ENCODE measurements at regions of chr2 and their contacts with region 1.

Region 1: GRCh38 chr2:235045336-235045972 is 93.6 kb downstream of the SH3BP4 start:
- DNase-seq: peak in 2 of 6 donors; percentile 49 to 55
- ATAC-seq: peak in 2 of 4 donors; percentile 7 to 8
- H3K4me3 ChIP-seq: peak overlapping the region in 1 of 4 donors; percentile 6
- H3K27ac ChIP-seq: peak overlapping the region; percentile 35 to 87 (median 66)
- H3K4me1 ChIP-seq: peaks cover 52 to 66% (median 54%) of the 10 kb centered on the region in 3 donors
- H3K27me3 ChIP-seq: no peaks in the 10 kb centered on the region
- CTCF ChIP-seq: no peak

Region 2: GRCh38 chr2:234792621-234793022 is 252.8 kb before region 1 on chr2:
- intact Hi-C with region 1: no loop called
- DNase-seq: no peak
- ATAC-seq: no peak
- H3K4me3 ChIP-seq: no peak overlapping the region
- H3K27ac ChIP-seq: no peak overlapping the region
- H3K4me1 ChIP-seq: no peaks in the 10 kb centered on the region
- H3K27me3 ChIP-seq: no peaks in the 10 kb centered on the region
- CTCF ChIP-seq: no peak

Region 3: DNA sequence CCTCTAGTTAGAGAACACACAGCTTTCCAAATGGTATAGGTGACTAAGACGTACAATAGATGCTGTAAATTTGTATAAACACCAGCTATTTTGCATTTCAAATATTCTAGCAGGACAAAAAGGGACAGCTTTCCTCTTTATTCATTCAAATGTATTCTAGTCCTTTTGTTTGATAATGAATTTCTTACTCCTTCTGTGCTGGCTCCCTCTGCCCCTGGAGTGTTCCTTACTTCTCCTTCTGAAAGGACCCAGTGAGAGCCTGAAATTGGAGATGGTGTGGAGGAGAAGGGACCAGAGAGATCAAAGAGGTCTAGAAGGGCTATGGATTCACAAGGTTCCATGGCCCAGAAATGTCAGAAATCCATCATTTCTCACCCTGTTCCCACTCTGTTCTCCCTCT is 146.8 kb before region 1 on chr2:
- intact Hi-C with region 1: no loop called
- DNase-seq: no peak
- ATAC-seq: no peak
- H3K4me3 ChIP-seq: no peak overlapping the region
- H3K27ac ChIP-seq: no peak overlapping the region
- H3K4me1 ChIP-seq: no peaks in the 10 kb centered on the region
- H3K27me3 ChIP-seq: no peaks in the 10 kb centered on the region
- CTCF ChIP-seq: no peak

Region 4: DNA sequence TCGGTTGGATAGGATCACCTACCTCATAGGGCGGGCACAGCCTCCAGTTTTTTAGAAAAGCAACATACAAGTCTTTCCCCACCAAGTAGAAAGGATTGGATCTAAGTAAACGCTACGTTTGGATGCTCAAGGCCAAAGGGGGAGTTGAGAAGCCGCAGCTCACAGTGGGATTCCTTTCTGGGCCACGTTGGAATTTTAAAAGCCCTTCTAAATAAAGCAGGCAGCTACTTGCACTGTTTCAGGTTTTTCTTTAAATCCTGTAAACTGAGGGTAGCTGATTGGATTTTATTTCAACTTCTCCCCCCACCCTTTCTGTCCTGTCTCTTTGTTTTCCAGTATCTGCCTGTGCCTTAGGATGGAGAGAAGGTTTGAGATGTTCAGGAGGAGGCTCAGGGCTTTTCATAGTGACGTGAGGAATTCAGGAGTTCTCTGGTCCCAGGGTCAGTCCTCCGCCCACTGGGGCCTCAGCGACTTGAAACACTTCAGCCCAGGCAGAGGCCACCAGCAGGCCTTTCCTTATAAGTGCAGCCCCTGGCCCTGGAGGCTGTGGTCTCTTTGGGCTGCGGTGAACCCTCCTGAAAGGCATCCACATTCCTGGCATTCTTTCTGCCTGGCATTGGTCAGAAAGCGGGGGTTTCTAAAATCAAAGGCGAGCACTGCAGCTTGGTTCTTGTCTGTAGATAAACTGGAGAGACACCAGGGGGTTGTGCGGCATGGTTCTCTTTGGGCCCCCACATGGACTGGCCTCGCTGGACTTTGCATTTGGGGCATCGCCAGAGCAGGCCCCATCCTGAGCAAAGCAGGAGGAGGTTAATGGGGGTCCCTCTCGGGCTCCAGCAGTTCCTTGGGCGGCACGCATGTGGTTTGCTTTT is 49.1 kb before region 1 on chr2:
- intact Hi-C with region 1: loop called in 1 of 3 experiments (anchors 10 kb)
- DNase-seq: peak in 1 of 6 donors; percentile 43
- ATAC-seq: peak in 2 of 4 donors; percentile 3 to 4
- H3K4me3 ChIP-seq: no peak overlapping the region
- H3K27ac ChIP-seq: peak overlapping the region; percentile 32 to 69 (median 57)
- H3K4me1 ChIP-seq: peaks cover 57 to 73% (median 59%) of the 10 kb centered on the region in 3 donors
- H3K27me3 ChIP-seq: no peaks in the 10 kb centered on the region
- CTCF ChIP-seq: no peak